Naive thymus-derived CD4-positive, alpha-beta T cell (primary cell): ENCODE measurements at regions of chr2 and their contacts with region 1.

Region 1: DNA sequence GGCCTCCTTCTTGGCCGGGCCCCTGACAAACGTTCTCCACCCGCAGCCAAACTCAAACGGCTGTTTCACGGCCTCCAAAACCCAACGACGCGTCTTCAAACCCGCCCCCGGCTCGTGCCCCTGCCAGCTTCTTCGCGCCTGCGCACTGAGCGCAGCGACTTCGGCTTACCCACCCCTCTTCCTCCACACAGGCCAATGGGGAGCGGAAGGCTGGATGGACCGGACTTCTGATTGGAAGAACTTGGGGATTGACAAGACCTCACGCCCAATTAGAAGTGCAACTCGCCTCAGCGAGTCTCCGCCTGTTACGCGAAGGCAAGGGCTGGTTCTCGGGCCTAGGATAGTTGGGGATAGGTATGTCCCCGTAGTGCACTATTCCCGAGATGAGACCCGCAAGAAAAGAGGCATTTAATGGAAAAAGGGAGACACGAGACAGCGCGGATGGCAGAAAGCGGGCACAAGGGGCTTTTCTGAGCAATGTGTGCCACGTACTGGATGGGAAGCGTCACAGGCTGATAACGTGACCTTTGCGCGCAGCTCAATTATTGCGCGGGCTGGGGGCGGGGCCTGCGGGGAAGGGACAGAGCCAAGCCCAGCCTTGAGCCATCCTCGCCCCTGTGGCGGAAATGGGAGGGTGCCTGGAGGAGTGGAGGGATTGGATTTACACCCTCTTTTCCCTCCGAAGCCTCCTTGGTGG is at the start of gene LAPTM4A:
- DNase-seq: peak; percentile 93 to 99 (median 98)
- ATAC-seq: peak; percentile 95
- H3K4me3 ChIP-seq: peak within 1 kb of the TSS; percentile 94
- H3K4me3 Mint-ChIP-seq: no peak within 1 kb of the TSS
- H3K27ac ChIP-seq: peak within 1 kb of the TSS; percentile 93
- H3K27ac Mint-ChIP-seq: no peak within 1 kb of the TSS
- H3K4me1 ChIP-seq: peaks cover 16 to 20% of the 10 kb centered on the region in 2 donors
- H3K4me1 Mint-ChIP-seq: peaks cover 25 to 34% (median 31%) of the 10 kb centered on the region in 7 donors
- H3K27me3 ChIP-seq: no peaks in the 10 kb centered on the region
- H3K27me3 Mint-ChIP-seq: peaks cover 14 to 19% (median 17%) of the 10 kb centered on the region in 5 donors
- total RNA-seq, gene LAPTM4A: 32.3 to 78.2 (median 48.7) TPM

Region 2: GRCh38 chr2:19868705-19869580 is 182.7 kb before region 1 on chr2:
- CTCF ChIA-PET with region 1: no interaction called
- POLR2A ChIA-PET with region 1: no interaction called
- intact Hi-C with region 1: loop called in 1 of 2 experiments (anchors 1 kb)
- DNase-seq: peak; percentile 41 to 79 (median 74)
- ATAC-seq: peak; percentile 91
- H3K4me3 ChIP-seq: peak overlapping the region; percentile 74
- H3K4me3 Mint-ChIP-seq: peak overlapping the region; percentile 94 to 98 (median 97)
- H3K27ac ChIP-seq: peak overlapping the region; percentile 76
- H3K27ac Mint-ChIP-seq: peak overlapping the region; percentile 95 to 98 (median 96)
- H3K4me1 ChIP-seq: peaks cover 12 to 19% of the 10 kb centered on the region in 2 donors
- H3K4me1 Mint-ChIP-seq: peaks cover 25 to 48% (median 34%) of the 10 kb centered on the region in 7 donors
- H3K27me3 ChIP-seq: no peaks in the 10 kb centered on the region
- H3K27me3 Mint-ChIP-seq: peaks cover 0 to 7% (median 0%) of the 10 kb centered on the region in 5 donors

Region 3: GRCh38 chr2:19989681-19990415 is 61.8 kb before region 1 on chr2 and contains the start of gene WDR35:
- CTCF ChIA-PET with region 1: no interaction called
- POLR2A ChIA-PET with region 1: interaction called, 5 read pairs
- intact Hi-C with region 1: loop called (anchors 1 kb)
- DNase-seq: peak; percentile 78 to 99 (median 86)
- ATAC-seq: peak; percentile 95
- H3K4me3 ChIP-seq: peak within 1 kb of the TSS; percentile 91
- H3K4me3 Mint-ChIP-seq: peak within 1 kb of the TSS; percentile 88 to 94 (median 89)
- H3K27ac ChIP-seq: peak within 1 kb of the TSS; percentile 68
- H3K27ac Mint-ChIP-seq: peak within 1 kb of the TSS; percentile 86 to 94 (median 89)
- H3K4me1 ChIP-seq: peaks cover 0 to 14% of the 10 kb centered on the region in 2 donors
- H3K4me1 Mint-ChIP-seq: peaks cover 11 to 33% (median 23%) of the 10 kb centered on the region in 7 donors
- H3K27me3 ChIP-seq: peaks cover 0 to 4% of the 10 kb centered on the region in 2 donors
- H3K27me3 Mint-ChIP-seq: peaks cover 7 to 30% (median 12%) of the 10 kb centered on the region in 5 donors
- total RNA-seq, gene WDR35: 3.2 to 6.0 (median 3.7) TPM

Region 4: GRCh38 chr2:20097879-20098714 is 46.4 kb after region 1 on chr2:
- CTCF ChIA-PET with region 1: no interaction called
- POLR2A ChIA-PET with region 1: no interaction called
- intact Hi-C with region 1: loop called (anchors 1 kb)
- DNase-seq: peak; percentile 58 to 73 (median 67)
- ATAC-seq: peak; percentile 94
- H3K4me3 ChIP-seq: no peak overlapping the region
- H3K4me3 Mint-ChIP-seq: no peak overlapping the region
- H3K27ac ChIP-seq: no peak overlapping the region
- H3K27ac Mint-ChIP-seq: no peak overlapping the region
- H3K4me1 ChIP-seq: no peaks in the 10 kb centered on the region
- H3K4me1 Mint-ChIP-seq: peaks cover 0 to 4% (median 0%) of the 10 kb centered on the region in 7 donors
- H3K27me3 ChIP-seq: no peaks in the 10 kb centered on the region
- H3K27me3 Mint-ChIP-seq: peaks cover 12 to 21% (median 13%) of the 10 kb centered on the region in 5 donors

Region 5: DNA sequence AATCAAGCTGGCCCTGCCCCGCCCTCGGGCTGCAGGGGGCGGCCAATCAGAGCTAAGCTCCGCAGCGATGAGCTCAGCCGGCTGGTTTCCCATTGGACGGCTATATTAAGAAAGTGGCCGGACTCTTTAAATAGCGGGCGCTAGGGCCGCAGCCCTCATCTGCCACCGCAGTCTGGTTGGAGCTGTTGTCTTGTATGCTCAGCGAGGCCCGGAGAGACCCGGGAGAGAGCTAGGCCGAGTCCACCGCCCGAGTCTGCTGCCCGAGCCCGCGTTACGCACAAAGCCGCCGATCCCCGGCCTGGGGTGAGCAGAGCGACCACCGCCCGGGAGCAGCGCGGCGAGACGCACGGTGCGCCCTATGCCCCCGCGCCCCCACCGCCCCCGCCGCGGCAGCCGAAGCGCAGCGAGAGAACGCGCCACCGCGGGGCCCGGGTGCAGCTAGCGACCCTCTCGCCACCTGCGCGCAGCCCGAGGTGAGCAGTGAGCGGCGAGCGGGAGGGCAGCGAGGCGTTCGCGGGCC is 395.3 kb after region 1 on chr2 and contains the start of gene RHOB:
- CTCF ChIA-PET with region 1: no interaction called
- POLR2A ChIA-PET with region 1: interaction called, 4 read pairs
- intact Hi-C with region 1: loop called (anchors 1 to 5 kb)
- DNase-seq: peak; percentile 75 to 90 (median 82)
- ATAC-seq: peak; percentile 97
- H3K4me3 ChIP-seq: peak within 1 kb of the TSS; percentile 71
- H3K4me3 Mint-ChIP-seq: peak within 1 kb of the TSS; percentile 77 to 88 (median 81)
- H3K27ac ChIP-seq: peak within 1 kb of the TSS; percentile 59
- H3K27ac Mint-ChIP-seq: peak within 1 kb of the TSS in 5 of 9 donors; percentile 11 to 81 (median 51)
- H3K4me1 ChIP-seq: peaks cover 6 to 12% of the 10 kb centered on the region in 2 donors
- H3K4me1 Mint-ChIP-seq: peaks cover 0 to 7% (median 4%) of the 10 kb centered on the region in 7 donors
- H3K27me3 ChIP-seq: peaks cover 0 to 3% of the 10 kb centered on the region in 2 donors
- H3K27me3 Mint-ChIP-seq: peaks cover 0 to 68% (median 13%) of the 10 kb centered on the region in 5 donors
- total RNA-seq, gene RHOB: 2.5 to 244 (median 11.7) TPM

Region 6: GRCh38 chr2:20822535-20823490 is 771.1 kb after region 1 on chr2 and contains the start of gene LDAH:
- CTCF ChIA-PET with region 1: no interaction called
- POLR2A ChIA-PET with region 1: no interaction called
- intact Hi-C with region 1: loop called (anchors 2 to 5 kb)
- DNase-seq: peak; percentile 71 to 84 (median 81)
- ATAC-seq: peak; percentile 91
- H3K4me3 ChIP-seq: peak within 1 kb of the TSS; percentile 98
- H3K4me3 Mint-ChIP-seq: peak within 1 kb of the TSS; percentile 93 to 99 (median 97)
- H3K27ac ChIP-seq: peak within 1 kb of the TSS; percentile 86
- H3K27ac Mint-ChIP-seq: peak within 1 kb of the TSS; percentile 95 to 99 (median 98)
- H3K4me1 ChIP-seq: no peaks in the 10 kb centered on the region
- H3K4me1 Mint-ChIP-seq: peaks cover 7 to 45% (median 25%) of the 10 kb centered on the region in 7 donors
- H3K27me3 ChIP-seq: no peaks in the 10 kb centered on the region
- H3K27me3 Mint-ChIP-seq: peaks cover 0 to 2% (median 0%) of the 10 kb centered on the region in 5 donors
- total RNA-seq, gene LDAH: 11.1 to 29.8 (median 18.4) TPM